ENCODE measurements at regions of chr17 and their contacts with region 1.

Region 1: GRCh38 chr17:67366193-67367157 is at the start of gene PSMD12:
- DNase-seq: peak; percentile 63
- ATAC-seq: peak; percentile 94
- H3K4me3 ChIP-seq: peak within 1 kb of the TSS; percentile 98
- H3K27ac ChIP-seq: peak within 1 kb of the TSS; percentile 80
- H3K4me1 ChIP-seq: peaks cover 6% of the 10 kb centered on the region; the same call in 1 of the 2 replicates
- H3K27me3 ChIP-seq: no peaks in the 10 kb centered on the region
- CTCF ChIP-seq: no peak
- EP300 ChIP-seq: no peak
- POLR2A ChIP-seq: peak; percentile 99
- RAD21 ChIP-seq: no peak
- polyA plus RNA-seq, gene PSMD12: 21.2 to 33.0 TPM

Region 2: GRCh38 chr17:67491009-67491680 is 124.7 kb after region 1 on chr17:
- CTCF ChIA-PET with region 1: no interaction called
- POLR2A ChIA-PET with region 1: no interaction called
- RAD21 ChIA-PET with region 1: no interaction called
- SMC1A ChIA-PET with region 1: no interaction called
- in situ Hi-C with region 1: no loop called
- intact Hi-C with region 1: no loop called
- DNase-seq: no peak
- ATAC-seq: no peak
- H3K4me3 ChIP-seq: no peak overlapping the region
- H3K27ac ChIP-seq: no peak overlapping the region
- H3K4me1 ChIP-seq: peaks cover 10% of the 10 kb centered on the region
- H3K27me3 ChIP-seq: no peaks in the 10 kb centered on the region
- CTCF ChIP-seq: no peak
- EP300 ChIP-seq: no peak
- POLR2A ChIP-seq: no peak
- RAD21 ChIP-seq: no peak

Region 3: DNA sequence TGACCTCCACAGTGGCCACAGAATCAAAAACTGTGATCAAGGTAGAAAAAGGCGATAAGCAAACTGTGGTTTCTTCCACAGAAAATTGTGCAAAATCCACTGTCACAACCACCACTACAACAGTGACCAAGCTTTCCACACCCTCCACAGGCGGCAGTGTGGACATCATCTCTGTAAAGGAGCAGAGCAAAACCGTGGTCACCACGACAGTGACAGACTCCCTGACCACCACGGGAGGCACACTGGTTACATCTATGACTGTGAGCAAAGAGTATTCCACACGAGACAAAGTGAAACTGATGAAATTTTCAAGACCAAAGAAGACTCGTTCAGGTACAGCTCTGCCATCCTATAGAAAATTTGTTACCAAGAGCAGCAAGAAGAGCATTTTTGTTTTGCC is 546.2 kb after region 1 on chr17:
- CTCF ChIA-PET with region 1: no interaction called
- POLR2A ChIA-PET with region 1: no interaction called
- RAD21 ChIA-PET with region 1: no interaction called
- SMC1A ChIA-PET with region 1: no interaction called
- in situ Hi-C with region 1: loop called (anchors 10 kb)
- intact Hi-C with region 1: no loop called
- DNase-seq: no peak
- ATAC-seq: no peak
- H3K4me3 ChIP-seq: no peak overlapping the region
- H3K27ac ChIP-seq: no peak overlapping the region
- H3K4me1 ChIP-seq: no peaks in the 10 kb centered on the region
- H3K27me3 ChIP-seq: no peaks in the 10 kb centered on the region
- CTCF ChIP-seq: no peak
- EP300 ChIP-seq: no peak
- POLR2A ChIP-seq: no peak
- RAD21 ChIP-seq: no peak

Measured in GM12878 (cell line).